ENCODE measurements at regions of chr19 and their contacts with region 1.

Region 1: DNA sequence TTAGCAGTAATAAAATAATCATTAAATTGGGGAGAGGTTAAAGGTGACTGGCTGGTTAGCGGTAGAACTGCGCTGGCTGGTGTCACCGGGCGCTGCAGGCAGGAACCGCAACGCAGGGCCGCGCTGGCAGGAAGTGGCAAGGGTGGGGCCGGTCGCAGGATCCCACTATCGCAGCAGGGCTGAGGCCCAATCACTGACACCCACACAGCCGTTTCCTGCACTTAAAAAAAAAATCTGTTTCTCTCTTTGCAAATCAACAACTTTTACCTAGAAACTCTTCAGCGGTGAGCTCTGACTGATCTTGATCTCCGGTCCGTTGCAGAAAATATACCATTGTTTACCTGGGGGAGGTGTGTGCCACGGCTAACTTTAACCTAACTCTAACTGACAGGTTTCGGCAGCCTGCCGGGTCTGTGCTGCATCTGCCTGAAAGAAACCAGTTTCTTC is 46.9 kb downstream of the KLF2 start:
- DNase-seq: peak; percentile 86 to 97 (median 96)
- H3K4me3 ChIP-seq: peak overlapping the region; percentile 46
- H3K4me3 Mint-ChIP-seq: no peak overlapping the region
- H3K27ac ChIP-seq: peak overlapping the region; percentile 84
- H3K27ac Mint-ChIP-seq: no peak overlapping the region
- H3K4me1 ChIP-seq: peaks cover 96% of the 10 kb centered on the region
- H3K4me1 Mint-ChIP-seq: peaks cover 0 to 43% (median 33%) of the 10 kb centered on the region in 3 donors
- H3K27me3 ChIP-seq: no peaks in the 10 kb centered on the region
- H3K27me3 Mint-ChIP-seq: peaks cover 0 to 7% of the 10 kb centered on the region in 2 donors

Region 2: DNA sequence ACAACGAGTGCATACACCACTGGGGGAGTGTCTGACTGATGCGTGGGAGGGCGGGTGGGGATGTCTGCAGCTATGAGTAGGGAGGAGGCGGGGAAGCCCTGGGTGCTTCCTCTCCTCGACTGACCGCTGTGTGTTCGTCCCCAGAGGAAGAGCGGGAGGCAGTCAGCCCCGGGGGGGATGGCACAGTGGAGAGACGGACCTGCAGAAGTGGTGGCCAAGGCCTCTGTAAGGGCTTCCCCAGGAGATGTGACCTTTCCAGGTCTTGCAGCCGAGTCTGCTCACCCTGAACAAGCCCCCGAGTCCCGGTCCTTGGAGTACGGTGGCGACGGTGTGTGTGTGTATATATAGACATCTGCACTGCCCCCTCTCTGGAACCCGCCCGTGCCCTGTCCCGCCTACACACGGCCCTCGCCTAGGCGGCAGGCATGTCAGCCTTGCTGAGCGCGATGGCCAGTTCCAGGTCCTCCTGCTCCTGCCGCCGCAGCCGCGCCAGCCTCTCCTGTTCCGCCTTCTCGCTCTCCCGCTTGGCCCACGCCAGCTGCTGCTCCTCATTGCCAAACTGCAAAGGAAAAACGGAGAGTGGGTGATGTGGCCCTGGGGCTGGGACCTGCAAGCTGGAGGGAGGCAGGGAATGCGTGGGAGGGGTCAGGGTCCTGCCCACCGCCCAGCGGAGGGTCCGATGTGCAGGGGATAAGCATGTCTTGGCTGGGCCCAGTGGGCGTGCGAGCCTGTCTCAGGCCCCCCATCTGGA is 16.1 kb before region 1 on chr19:
- CTCF ChIA-PET with region 1: no interaction called
- POLR2A ChIA-PET with region 1: interaction called, 10 read pairs
- DNase-seq: no peak
- H3K4me3 ChIP-seq: no peak overlapping the region
- H3K4me3 Mint-ChIP-seq: peak overlapping the region in 5 of 7 donors; percentile 16 to 75 (median 50)
- H3K27ac ChIP-seq: no peak overlapping the region
- H3K27ac Mint-ChIP-seq: peak overlapping the region in 4 of 8 donors; percentile 19 to 69 (median 33)
- H3K4me1 ChIP-seq: peaks cover 75% of the 10 kb centered on the region
- H3K4me1 Mint-ChIP-seq: peaks cover 52 to 75% (median 65%) of the 10 kb centered on the region in 3 donors
- H3K27me3 ChIP-seq: no peaks in the 10 kb centered on the region
- H3K27me3 Mint-ChIP-seq: no peaks in the 10 kb centered on the region

Region 3: GRCh38 chr19:16429066-16429758 is 57.6 kb after region 1 on chr19:
- CTCF ChIA-PET with region 1: no interaction called
- POLR2A ChIA-PET with region 1: no interaction called
- DNase-seq: no peak
- H3K4me3 ChIP-seq: no peak overlapping the region
- H3K4me3 Mint-ChIP-seq: peak overlapping the region in 2 of 7 donors; percentile 29 to 60
- H3K27ac ChIP-seq: no peak overlapping the region
- H3K27ac Mint-ChIP-seq: peak overlapping the region in 7 of 8 donors; percentile 20 to 95 (median 66)
- H3K4me1 ChIP-seq: peaks cover 7% of the 10 kb centered on the region
- H3K4me1 Mint-ChIP-seq: peaks cover 7 to 13% (median 8%) of the 10 kb centered on the region in 3 donors
- H3K27me3 ChIP-seq: no peaks in the 10 kb centered on the region
- H3K27me3 Mint-ChIP-seq: no peaks in the 10 kb centered on the region

Region 4: GRCh38 chr19:16628183-16628983 is 256.8 kb after region 1 on chr19 and contains the start of gene MED26:
- CTCF ChIA-PET with region 1: no interaction called
- POLR2A ChIA-PET with region 1: no interaction called
- DNase-seq: peak; percentile 91 to 97 (median 93)
- H3K4me3 ChIP-seq: peak within 1 kb of the TSS; percentile 83
- H3K4me3 Mint-ChIP-seq: peak within 1 kb of the TSS; percentile 95 to 99 (median 98)
- H3K27ac ChIP-seq: peak within 1 kb of the TSS; percentile 90
- H3K27ac Mint-ChIP-seq: peak within 1 kb of the TSS; percentile 90 to 100 (median 96)
- H3K4me1 ChIP-seq: peaks cover 30% of the 10 kb centered on the region
- H3K4me1 Mint-ChIP-seq: peaks cover 37 to 52% (median 47%) of the 10 kb centered on the region in 3 donors
- H3K27me3 ChIP-seq: no peaks in the 10 kb centered on the region
- H3K27me3 Mint-ChIP-seq: no peaks in the 10 kb centered on the region
- total RNA-seq, gene MED26: 14.7 to 17.1 TPM

Measured in CD8-positive, alpha-beta memory T cell (primary cell).